ENCODE measurements at regions of chrX and their contacts with region 1.

Region 1: DNA sequence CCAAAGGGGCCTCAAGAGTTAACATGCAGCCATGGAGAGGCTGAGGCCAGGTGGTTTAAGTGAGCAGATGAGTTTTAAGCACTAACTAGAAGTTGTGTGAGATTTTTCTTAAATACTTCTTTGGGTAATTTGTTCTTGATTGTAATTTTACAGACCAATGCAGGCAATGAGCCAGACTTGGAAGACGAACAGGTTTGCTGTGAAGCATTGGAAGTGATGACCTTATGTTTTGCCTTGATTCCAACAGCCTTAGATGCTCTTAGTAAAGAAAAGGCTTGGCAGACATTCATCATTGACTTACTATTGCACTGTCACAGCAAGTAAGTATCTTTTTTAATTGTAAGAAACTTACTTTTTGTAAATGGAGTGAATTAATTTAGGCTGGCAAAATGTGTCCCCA is 103.9 kb downstream of the USP9X start:
- DNase-seq: no peak
- ATAC-seq: no peak
- H3K4me3 ChIP-seq: no peak overlapping the region
- H3K27ac ChIP-seq: no peak overlapping the region
- H3K4me1 ChIP-seq: no peaks in the 10 kb centered on the region
- H3K27me3 ChIP-seq: no peaks in the 10 kb centered on the region
- CTCF ChIP-seq: no peak
- POLR2A ChIP-seq: no peak
- RAD21 ChIP-seq: no peak

Region 2: GRCh38 chrX:41064028-41064427 is 125.1 kb before region 1 on chrX:
- CTCF ChIA-PET with region 1: no interaction called
- POLR2A ChIA-PET with region 1: no interaction called
- RAD21 ChIA-PET with region 1: no interaction called
- intact Hi-C with region 1: no loop called
- DNase-seq: no peak
- ATAC-seq: no peak
- H3K4me3 ChIP-seq: no peak overlapping the region
- H3K27ac ChIP-seq: no peak overlapping the region
- H3K4me1 ChIP-seq: peaks cover 0 to 4% of the 10 kb centered on the region in 2 experiments; a peak in 1 of 4 replicates
- H3K27me3 ChIP-seq: no peaks in the 10 kb centered on the region
- CTCF ChIP-seq: no peak
- POLR2A ChIP-seq: no peak
- RAD21 ChIP-seq: no peak

Region 3: DNA sequence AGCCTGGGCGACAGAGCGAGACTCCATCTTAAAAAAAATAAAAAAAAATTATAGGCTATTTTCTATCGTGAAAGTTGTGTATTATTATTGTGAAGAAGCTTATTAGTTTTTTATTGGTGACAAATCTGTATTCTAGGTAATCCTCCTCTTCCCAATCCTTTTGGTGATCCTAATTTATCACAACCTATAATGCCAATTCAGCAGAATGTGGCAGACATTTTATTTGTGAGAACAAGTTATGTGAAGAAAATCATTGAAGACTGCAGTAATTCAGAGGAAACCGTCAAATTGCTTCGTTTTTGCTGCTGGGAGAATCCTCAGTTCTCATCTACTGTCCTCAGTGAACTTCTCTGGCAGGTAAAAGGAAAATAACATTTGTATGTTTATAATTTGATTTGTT is 35.5 kb after region 1 on chrX:
- CTCF ChIA-PET with region 1: no interaction called
- POLR2A ChIA-PET with region 1: no interaction called
- RAD21 ChIA-PET with region 1: no interaction called
- intact Hi-C with region 1: loop called (anchors 5 kb)
- DNase-seq: no peak
- ATAC-seq: no peak
- H3K4me3 ChIP-seq: no peak overlapping the region
- H3K27ac ChIP-seq: no peak overlapping the region
- H3K4me1 ChIP-seq: no peaks in the 10 kb centered on the region
- H3K27me3 ChIP-seq: no peaks in the 10 kb centered on the region
- CTCF ChIP-seq: no peak
- POLR2A ChIP-seq: no peak
- RAD21 ChIP-seq: no peak

Region 4: DNA sequence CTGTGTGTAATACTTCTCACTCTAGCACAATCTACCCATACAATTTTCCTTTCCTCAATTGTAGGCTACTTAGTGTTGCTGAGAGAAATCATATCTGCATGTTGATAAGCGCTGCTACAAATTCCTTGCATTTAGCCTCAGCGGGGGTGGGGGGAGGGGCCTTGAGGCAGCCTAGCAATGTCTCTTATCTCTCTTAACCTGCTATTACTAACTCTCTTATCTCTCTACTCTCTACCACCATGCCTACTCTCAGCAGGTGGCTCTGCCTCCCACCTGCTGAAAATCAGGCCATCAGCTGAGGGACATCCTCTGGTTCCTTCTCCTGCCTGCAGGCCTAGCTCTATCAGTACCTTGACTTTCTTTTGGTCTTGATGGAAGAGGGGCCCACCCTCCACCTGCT is 633.7 kb after region 1 on chrX:
- CTCF ChIA-PET with region 1: no interaction called
- POLR2A ChIA-PET with region 1: no interaction called
- RAD21 ChIA-PET with region 1: no interaction called
- intact Hi-C with region 1: no loop called
- DNase-seq: no peak
- ATAC-seq: no peak
- H3K4me3 ChIP-seq: no peak overlapping the region
- H3K27ac ChIP-seq: no peak overlapping the region
- H3K4me1 ChIP-seq: peaks cover 18 to 39% of the 10 kb centered on the region in 2 experiments
- H3K27me3 ChIP-seq: no peaks in the 10 kb centered on the region
- CTCF ChIP-seq: no peak
- POLR2A ChIP-seq: no peak
- RAD21 ChIP-seq: no peak

Measured in HCT116 (cell line).